PC-3 (cell line): ENCODE measurements at regions of chr3 and their contacts with region 1.

Region 1: GRCh38 chr3:161576714-161577510 is 80.3 kb downstream of the OTOL1 start:
- DNase-seq: peak; percentile 81
- ATAC-seq: peak; percentile 96
- H3K4me3 ChIP-seq: peak overlapping the region; percentile 50
- H3K27ac ChIP-seq: peak overlapping the region; percentile 70
- H3K4me1 ChIP-seq: peaks cover 18% of the 10 kb centered on the region
- H3K27me3 ChIP-seq: no peaks in the 10 kb centered on the region
- CTCF ChIP-seq: no peak

Region 2: GRCh38 chr3:161607056-161607455 is 30.1 kb after region 1 on chr3:
- CTCF ChIA-PET with region 1: no interaction called
- POLR2A ChIA-PET with region 1: no interaction called
- intact Hi-C with region 1: loop called (anchors 1 kb)
- DNase-seq: peak; percentile 40
- ATAC-seq: peak; percentile 79
- H3K4me3 ChIP-seq: no peak overlapping the region
- H3K27ac ChIP-seq: no peak overlapping the region
- H3K4me1 ChIP-seq: peaks cover 3% of the 10 kb centered on the region; the same call in 1 of the 2 replicates
- H3K27me3 ChIP-seq: no peaks in the 10 kb centered on the region
- CTCF ChIP-seq: no peak